Dorsolateral prefrontal cortex (tissue), 120 donors: ENCODE measurements at regions of chr10 and their contacts with region 1.

Region 1: DNA sequence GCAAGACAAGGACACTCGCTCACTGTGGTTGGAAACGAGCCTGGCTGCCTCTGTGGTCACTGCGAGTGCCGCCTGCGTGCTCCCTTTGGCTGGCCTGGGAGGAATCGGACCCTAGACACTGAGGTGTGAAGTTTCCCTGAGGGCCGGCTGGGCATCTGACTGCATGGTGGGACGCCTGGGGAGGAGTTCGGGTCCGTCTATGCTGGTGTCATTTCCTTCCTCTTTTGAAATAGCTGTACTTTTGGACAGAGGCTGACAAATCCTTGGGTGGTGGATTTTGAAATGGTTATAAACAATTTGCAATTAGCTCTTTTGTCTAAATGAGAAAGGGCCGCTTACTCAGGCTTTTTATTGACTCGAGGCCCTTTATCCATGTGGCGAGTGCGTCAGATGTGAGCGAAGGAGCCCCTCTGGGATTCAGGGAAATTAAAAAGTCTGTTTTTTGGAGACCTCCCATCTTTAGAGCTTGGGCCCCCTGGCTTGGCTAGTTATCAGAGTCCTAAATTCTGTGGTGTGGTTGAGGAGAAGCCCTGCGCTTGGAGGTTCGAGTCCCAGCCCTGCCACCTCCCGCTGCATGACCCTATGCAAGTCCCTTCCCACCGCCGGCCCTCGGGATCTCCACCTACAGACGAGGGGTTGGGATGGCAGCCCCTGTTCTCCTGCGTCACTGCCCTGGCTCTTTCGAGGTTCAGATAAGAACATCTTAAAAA is 147.1 kb downstream of the RGS10 start:
- DNase-seq: peak in 3 of 10 donors; percentile 19 to 44 (median 31)
- H3K4me3 ChIP-seq: no peak overlapping the region
- H3K27ac ChIP-seq: peak overlapping the region in 38 of 59 donors; percentile 1 to 76 (median 50)
- H3K27me3 ChIP-seq: no peaks in the 10 kb centered on the region
- CTCF ChIP-seq: no peak

Region 2: GRCh38 chr10:119305860-119306513 is 89.4 kb before region 1 on chr10:
- intact Hi-C with region 1: loop called in 1 of 2 experiments (anchors 10 kb)
- DNase-seq: peak in 3 of 10 donors; percentile 12 to 48 (median 31)
- H3K4me3 ChIP-seq: no peak overlapping the region
- H3K27ac ChIP-seq: no peak overlapping the region
- H3K27me3 ChIP-seq: no peaks in the 10 kb centered on the region
- CTCF ChIP-seq: no peak

Region 3: GRCh38 chr10:119428789-119429188 is 33.4 kb after region 1 on chr10:
- intact Hi-C with region 1: no loop called
- DNase-seq: no peak
- H3K4me3 ChIP-seq: no peak overlapping the region
- H3K27ac ChIP-seq: no peak overlapping the region
- H3K27me3 ChIP-seq: no peaks in the 10 kb centered on the region
- CTCF ChIP-seq: no peak

Region 4: DNA sequence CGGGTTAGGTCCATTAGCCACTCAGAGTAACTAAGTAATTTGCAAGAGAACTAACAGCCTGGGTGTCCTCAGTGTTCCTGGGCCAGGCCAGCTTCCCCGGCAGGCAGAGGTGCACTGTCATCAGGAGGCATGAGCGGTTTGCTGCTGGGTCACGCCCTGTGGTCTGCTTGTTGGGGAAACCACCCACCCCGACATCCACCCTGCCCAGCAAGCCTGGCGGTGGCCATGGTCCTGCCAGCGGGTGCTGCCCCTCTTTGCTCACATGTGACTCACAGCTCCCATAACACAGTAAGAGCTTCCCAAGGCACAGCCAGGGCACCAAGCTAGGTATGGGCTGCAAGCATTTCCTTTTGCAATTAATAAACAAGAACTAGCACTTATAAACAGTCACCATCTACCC is 71.2 kb after region 1 on chr10:
- intact Hi-C with region 1: no loop called
- DNase-seq: no peak
- H3K4me3 ChIP-seq: no peak overlapping the region
- H3K27ac ChIP-seq: no peak overlapping the region
- H3K27me3 ChIP-seq: peaks cover 0 to 8% (median 0%) of the 10 kb centered on the region in 45 donors
- CTCF ChIP-seq: no peak

Region 5: DNA sequence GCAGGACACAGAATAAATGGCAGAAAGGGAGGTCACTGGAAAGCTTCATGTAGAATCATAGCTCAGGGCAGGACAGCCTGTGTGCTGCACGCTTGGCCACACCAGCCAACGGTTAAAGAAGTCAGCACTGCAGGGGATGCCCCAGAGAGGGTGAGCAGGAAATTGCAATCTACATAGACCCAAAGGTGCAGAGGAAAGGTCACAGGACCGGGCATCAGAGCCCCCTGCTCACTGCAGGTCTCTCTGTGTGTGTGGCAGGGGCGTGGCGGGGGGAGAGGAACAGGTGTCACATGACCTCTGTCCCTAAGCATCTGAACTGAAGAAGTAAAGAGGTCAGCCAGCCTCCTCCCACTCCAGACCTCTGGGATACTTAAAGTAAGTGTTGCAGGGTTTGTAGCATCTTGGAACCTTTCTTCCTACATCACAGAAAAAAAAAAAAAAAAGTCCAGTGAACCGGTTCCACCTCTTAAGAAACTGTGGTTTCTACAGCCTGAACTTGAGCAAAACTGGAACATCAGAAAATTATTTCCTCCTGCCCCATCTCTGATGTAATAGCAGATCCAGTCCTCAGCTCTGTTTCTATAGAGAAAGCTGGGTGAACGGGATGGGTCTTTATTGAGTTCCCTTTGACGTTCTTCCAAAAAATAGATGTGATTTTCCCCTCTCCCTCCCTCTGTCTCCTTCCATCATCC is 82.8 kb after region 1 on chr10:
- intact Hi-C with region 1: no loop called
- DNase-seq: no peak
- H3K4me3 ChIP-seq: no peak overlapping the region
- H3K27ac ChIP-seq: no peak overlapping the region
- H3K27me3 ChIP-seq: peaks cover 0 to 54% (median 9%) of the 10 kb centered on the region in 45 donors
- CTCF ChIP-seq: no peak